ENCODE measurements at regions of chr5 and their contacts with region 1.

Region 1: GRCh38 chr5:176447982-176448608 is at the start of gene FAF2:
- DNase-seq: peak; percentile 99
- H3K4me3 Mint-ChIP-seq: peak within 1 kb of the TSS; percentile 97
- H3K27ac Mint-ChIP-seq: peak within 1 kb of the TSS; percentile 98
- H3K4me1 Mint-ChIP-seq: peaks cover 25% of the 10 kb centered on the region
- H3K27me3 Mint-ChIP-seq: no peaks in the 10 kb centered on the region
- total RNA-seq, gene FAF2: 34.4 to 34.6 TPM

Region 2: DNA sequence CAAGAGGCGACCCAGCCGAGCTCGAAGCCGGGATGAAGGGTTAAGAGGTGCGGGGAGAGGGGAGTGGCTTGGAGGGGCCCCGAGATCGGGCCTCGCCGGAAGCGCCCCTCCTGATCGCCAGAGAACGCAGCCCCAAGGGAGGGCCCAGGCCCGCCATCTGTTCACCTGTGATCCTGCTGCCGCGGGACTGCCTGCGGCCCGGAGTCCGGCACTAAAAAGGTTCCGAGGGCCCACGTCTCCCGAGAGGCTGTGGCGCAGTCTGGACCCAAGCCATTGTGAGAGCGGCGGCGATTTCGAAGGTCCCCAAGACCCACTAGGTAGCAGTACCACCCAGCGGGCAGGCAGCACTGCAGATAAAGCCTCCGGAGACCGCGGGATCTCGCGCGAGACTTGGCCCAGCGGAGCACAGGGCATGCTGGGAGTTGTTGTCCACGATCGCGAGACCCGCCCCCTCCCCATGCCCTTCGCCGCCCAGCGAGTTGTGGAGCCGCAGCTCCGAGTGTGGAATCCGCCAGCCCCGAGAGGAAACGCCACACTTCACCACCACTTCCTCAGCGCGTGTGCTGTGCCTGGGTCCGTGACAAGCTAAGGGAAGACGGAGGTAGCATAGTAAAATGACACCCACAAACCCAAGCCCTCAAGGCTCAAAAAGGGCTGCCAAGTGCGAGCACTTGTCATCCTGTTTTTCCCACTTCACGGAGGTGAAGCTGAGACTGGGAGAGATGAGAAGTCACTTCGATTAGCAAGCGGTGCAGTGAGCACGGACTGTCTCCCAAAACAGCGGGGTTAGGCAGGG is 86.5 kb before region 1 on chr5 and contains the start of gene KIAA1191:
- CTCF ChIA-PET with region 1: interaction called, 4 read pairs
- POLR2A ChIA-PET with region 1: no interaction called
- intact Hi-C with region 1: loop called (anchors 2 kb)
- DNase-seq: peak; percentile 97
- H3K4me3 Mint-ChIP-seq: peak within 1 kb of the TSS; percentile 99
- H3K27ac Mint-ChIP-seq: peak within 1 kb of the TSS; percentile 90
- H3K4me1 Mint-ChIP-seq: peaks cover 38% of the 10 kb centered on the region
- H3K27me3 Mint-ChIP-seq: no peaks in the 10 kb centered on the region
- total RNA-seq, gene KIAA1191: 35.3 to 40.3 TPM

Region 3: DNA sequence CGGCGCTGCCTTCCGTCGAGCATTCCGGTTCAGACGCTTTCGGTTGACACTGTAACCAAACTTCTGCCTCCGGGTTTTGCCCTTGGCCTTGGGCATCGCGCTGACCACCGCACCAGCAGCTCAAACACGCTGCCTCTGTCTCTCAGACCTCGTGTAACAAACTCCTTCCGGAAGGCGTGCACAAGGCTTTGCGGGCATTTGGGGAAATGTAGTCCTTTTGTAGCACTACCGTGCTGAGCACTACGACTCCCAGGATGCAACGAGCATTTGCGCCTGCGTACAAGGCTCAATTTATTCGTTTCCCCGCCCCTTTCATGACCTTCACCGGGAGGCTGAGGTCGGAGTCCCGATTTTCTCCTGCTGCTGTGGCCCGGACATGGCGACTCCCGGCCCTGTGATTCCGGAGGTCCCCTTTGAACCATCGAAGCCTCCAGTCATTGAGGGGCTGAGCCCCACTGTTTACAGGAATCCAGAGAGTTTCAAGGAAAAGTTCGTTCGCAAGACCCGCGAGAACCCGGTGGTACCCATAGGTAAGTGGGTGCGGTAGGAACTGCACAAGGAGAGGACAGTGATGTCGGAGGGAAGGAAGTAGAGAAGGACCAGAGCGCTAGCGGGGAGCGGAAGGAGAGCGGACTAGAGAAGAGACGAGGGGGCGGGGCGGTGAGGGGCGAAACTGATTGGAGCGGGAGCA is 59.5 kb before region 1 on chr5 and contains the starts of genes HIGD2A and NOP16:
- CTCF ChIA-PET with region 1: interaction called, 3 read pairs
- POLR2A ChIA-PET with region 1: interaction called, 6 read pairs
- intact Hi-C with region 1: loop called (anchors 1 kb)
- DNase-seq: peak; percentile 100
- H3K4me3 Mint-ChIP-seq: peak within 1 kb of the TSS; percentile 99
- H3K27ac Mint-ChIP-seq: peak within 1 kb of the TSS; percentile 98
- H3K4me1 Mint-ChIP-seq: peaks cover 27% of the 10 kb centered on the region
- H3K27me3 Mint-ChIP-seq: no peaks in the 10 kb centered on the region
- total RNA-seq, gene HIGD2A: 112 to 119 TPM
- total RNA-seq, gene NOP16: 52.5 to 57.6 TPM

Region 4: DNA sequence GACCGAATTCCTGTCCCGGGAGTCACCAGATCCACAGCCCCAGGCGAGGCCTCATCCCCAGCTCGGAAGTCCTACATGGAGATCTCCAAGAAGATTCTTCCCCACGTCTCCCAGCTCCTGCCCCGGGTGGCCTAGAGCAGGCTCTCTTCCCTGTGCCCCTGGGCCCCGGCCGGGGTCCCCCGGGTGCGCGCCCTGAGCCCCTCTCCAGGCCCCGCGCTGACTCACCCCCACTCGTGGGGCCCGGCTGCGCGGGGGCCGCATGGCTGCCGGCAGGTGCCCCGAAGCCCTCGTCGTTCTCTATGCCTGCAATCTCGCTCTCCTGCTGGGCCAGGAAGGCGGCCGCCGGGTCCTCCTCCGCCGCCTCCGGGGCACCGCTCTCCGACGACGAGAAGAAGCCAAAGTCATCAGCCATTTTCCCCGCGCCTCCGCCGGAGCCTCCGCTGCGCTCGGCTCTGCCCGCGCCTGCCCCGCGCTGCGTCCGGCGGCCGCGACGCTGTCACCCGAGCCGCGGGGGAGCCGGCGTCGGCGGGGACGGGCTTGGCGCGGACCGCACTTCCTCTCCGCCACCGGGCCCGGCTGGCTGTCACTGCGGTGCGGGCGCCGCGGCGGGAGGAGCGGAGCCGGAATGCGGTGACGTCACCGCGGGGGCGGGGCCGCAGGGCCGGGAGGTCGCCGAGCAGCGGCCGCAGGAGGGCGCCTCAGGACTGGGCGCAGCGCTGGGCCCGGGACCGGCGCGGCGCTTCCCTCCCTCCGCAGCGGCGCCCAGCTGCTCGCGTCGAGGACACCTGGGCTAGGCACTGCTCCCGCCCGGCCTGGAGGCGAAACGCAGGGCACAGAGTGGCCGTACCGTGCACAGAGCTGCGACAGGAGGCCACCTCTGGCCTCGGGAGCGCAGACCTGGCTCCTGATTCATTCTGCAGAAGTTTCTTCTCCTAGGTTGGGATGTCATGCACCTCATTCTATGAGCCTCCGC is 31.9 kb before region 1 on chr5 and contains the start of gene CLTB:
- CTCF ChIA-PET with region 1: interaction called, 49 read pairs
- POLR2A ChIA-PET with region 1: interaction called, 8 read pairs
- intact Hi-C with region 1: loop called (anchors 1 kb)
- DNase-seq: peak; percentile 93
- H3K4me3 Mint-ChIP-seq: peak within 1 kb of the TSS; percentile 77
- H3K27ac Mint-ChIP-seq: peak within 1 kb of the TSS; percentile 65
- H3K4me1 Mint-ChIP-seq: peaks cover 36% of the 10 kb centered on the region
- H3K27me3 Mint-ChIP-seq: no peaks in the 10 kb centered on the region
- total RNA-seq, gene CLTB: 51.5 to 57.0 TPM

Region 5: GRCh38 chr5:176436661-176437071 is 11.4 kb before region 1 on chr5:
- CTCF ChIA-PET with region 1: interaction called, 14 read pairs
- POLR2A ChIA-PET with region 1: interaction called, 3 read pairs
- intact Hi-C with region 1: loop called (anchors 1 kb)
- DNase-seq: peak; percentile 29
- H3K4me3 Mint-ChIP-seq: peak overlapping the region; percentile 48
- H3K27ac Mint-ChIP-seq: no peak overlapping the region
- H3K4me1 Mint-ChIP-seq: peaks cover 11% of the 10 kb centered on the region
- H3K27me3 Mint-ChIP-seq: peaks cover 2% of the 10 kb centered on the region

Region 6: GRCh38 chr5:176466245-176466871 is 18.3 kb after region 1 on chr5:
- CTCF ChIA-PET with region 1: interaction called, 11 read pairs
- POLR2A ChIA-PET with region 1: no interaction called
- intact Hi-C with region 1: no loop called
- DNase-seq: no peak
- H3K4me3 Mint-ChIP-seq: no peak overlapping the region
- H3K27ac Mint-ChIP-seq: no peak overlapping the region
- H3K4me1 Mint-ChIP-seq: peaks cover 15% of the 10 kb centered on the region
- H3K27me3 Mint-ChIP-seq: no peaks in the 10 kb centered on the region

Region 7: GRCh38 chr5:176543428-176544173 is 95.5 kb after region 1 on chr5:
- CTCF ChIA-PET with region 1: interaction called, 33 read pairs
- POLR2A ChIA-PET with region 1: interaction called, 13 read pairs
- intact Hi-C with region 1: no loop called
- DNase-seq: peak; percentile 84
- H3K4me3 Mint-ChIP-seq: peak overlapping the region; percentile 92
- H3K27ac Mint-ChIP-seq: peak overlapping the region; percentile 93
- H3K4me1 Mint-ChIP-seq: peaks cover 61% of the 10 kb centered on the region
- H3K27me3 Mint-ChIP-seq: no peaks in the 10 kb centered on the region

Region 8: GRCh38 chr5:176901260-176902101 is 453.4 kb after region 1 on chr5:
- CTCF ChIA-PET with region 1: no interaction called
- POLR2A ChIA-PET with region 1: no interaction called
- intact Hi-C with region 1: no loop called
- DNase-seq: peak; percentile 29
- H3K4me3 Mint-ChIP-seq: no peak overlapping the region
- H3K27ac Mint-ChIP-seq: peak overlapping the region; percentile 54
- H3K4me1 Mint-ChIP-seq: peaks cover 39% of the 10 kb centered on the region
- H3K27me3 Mint-ChIP-seq: no peaks in the 10 kb centered on the region